Activated T-helper 2 cell treated with anti-CD3 and anti-CD28 coated beads, Interferon-gamma antibody, Interleukin-2, Interleukin-4, amounts not matched to agents 10 μg/mL and 5 μg/mL and 100 μg/mL, durations not matched to agents 14 hours and 24 hours and 36 hours (primary cell): ENCODE measurements at regions of chr12 and their contacts with region 1.

Region 1: DNA sequence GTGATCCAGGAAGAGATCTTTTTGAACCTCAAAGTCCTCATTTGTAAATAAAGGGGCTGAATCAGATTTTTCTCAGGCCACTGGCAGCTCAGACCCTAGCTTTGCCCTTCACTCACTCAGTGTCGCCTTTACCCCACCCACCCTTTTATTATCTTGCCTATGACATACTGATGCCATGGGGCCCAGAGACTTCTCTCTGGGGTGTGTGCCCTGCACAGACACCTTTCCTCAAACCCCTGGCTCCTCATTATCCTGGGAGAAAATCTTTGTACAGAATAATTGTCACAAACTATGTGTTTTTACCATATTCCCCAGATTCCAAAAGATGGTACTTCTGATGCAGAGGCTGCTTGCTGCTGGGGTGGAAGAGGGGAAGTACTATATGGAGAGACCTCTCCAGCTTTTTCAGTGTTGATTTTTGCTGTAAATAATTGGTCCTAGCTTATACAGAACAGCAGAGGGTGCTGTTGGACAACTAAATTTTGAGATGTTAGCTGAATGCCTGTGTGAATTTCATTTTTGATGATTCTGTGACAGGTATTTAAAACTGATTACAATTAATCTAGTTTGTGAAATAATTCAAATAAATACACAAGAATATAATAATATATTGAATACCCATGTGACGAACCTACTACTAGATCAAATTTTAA is 53.9 kb upstream of the DCD start:
- DNase-seq: no peak
- H3K4me3 Mint-ChIP-seq: no peak overlapping the region
- H3K27ac Mint-ChIP-seq: no peak overlapping the region
- H3K4me1 Mint-ChIP-seq: no peaks in the 10 kb centered on the region
- H3K27me3 Mint-ChIP-seq: peaks cover 19% of the 10 kb centered on the region

Region 2: DNA sequence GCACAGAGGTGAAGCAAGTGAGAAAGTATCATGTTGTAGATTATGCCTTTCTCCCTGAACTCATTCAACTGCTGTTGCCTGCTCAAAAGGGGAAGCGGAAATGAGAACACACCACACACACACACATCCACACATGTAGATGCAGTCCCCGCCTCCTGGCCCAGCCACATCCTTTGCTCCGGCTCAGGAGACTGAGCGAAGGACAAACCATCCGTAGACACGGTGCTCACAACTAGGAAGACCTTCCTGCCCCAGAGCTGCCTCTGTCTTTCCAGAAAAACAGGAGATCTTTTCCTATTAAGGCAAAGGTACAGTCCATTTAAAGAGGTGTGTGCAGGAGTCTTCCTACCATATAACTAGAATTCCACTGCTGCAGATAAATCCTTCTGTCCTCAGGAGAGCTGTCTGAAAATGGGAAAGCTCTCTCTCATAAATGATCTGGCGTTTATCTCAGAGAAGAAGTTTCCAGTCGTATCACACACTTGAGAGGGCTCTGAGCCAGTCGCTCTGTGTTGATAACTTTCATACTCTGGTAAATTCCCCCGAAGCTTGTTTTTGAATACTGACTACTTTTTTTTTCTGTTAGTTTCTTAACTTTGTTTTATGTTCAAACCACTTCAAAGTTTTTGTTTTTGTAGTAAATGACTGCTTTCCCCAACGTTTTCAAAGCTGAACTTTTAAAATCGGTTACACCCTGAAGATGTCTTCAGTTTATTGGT is 282.8 kb after region 1 on chr12 and contains the start of gene TESPA1:
- intact Hi-C with region 1: no loop called
- DNase-seq: peak; percentile 82
- H3K4me3 Mint-ChIP-seq: peak within 1 kb of the TSS; percentile 92
- H3K27ac Mint-ChIP-seq: peak within 1 kb of the TSS; percentile 89
- H3K4me1 Mint-ChIP-seq: peaks cover 59% of the 10 kb centered on the region
- H3K27me3 Mint-ChIP-seq: no peaks in the 10 kb centered on the region
- total RNA-seq, gene TESPA1: 179 and 186 TPM in 2 replicates

Region 3: GRCh38 chr12:55073043-55074022 is 371.3 kb after region 1 on chr12:
- intact Hi-C with region 1: loop called (anchors 5 kb)
- DNase-seq: peak; percentile 60
- H3K4me3 Mint-ChIP-seq: no peak overlapping the region
- H3K27ac Mint-ChIP-seq: no peak overlapping the region
- H3K4me1 Mint-ChIP-seq: peaks cover 10% of the 10 kb centered on the region
- H3K27me3 Mint-ChIP-seq: peaks cover 31% of the 10 kb centered on the region